Sigmoid colon (tissue), 7 donors: ENCODE measurements at regions of chr11 and their contacts with region 1.

Region 1: GRCh38 chr11:66386171-66387069 is 14.9 kb upstream of the SLC29A2 start:
- DNase-seq: peak; percentile 92
- H3K4me3 ChIP-seq: peak overlapping the region in 3 of 4 donors; percentile 8 to 30 (median 24)
- H3K27ac ChIP-seq: peak overlapping the region in 1 of 4 donors; percentile 23
- H3K4me1 ChIP-seq: peaks cover 0 to 6% (median 4%) of the 10 kb centered on the region in 4 donors
- H3K27me3 ChIP-seq: peaks cover 0 to 5% (median 0%) of the 10 kb centered on the region in 3 donors
- CTCF ChIP-seq: peak; percentile 68 to 93 (median 76)
- EP300 ChIP-seq: no peak
- POLR2A ChIP-seq: no peak

Region 2: DNA sequence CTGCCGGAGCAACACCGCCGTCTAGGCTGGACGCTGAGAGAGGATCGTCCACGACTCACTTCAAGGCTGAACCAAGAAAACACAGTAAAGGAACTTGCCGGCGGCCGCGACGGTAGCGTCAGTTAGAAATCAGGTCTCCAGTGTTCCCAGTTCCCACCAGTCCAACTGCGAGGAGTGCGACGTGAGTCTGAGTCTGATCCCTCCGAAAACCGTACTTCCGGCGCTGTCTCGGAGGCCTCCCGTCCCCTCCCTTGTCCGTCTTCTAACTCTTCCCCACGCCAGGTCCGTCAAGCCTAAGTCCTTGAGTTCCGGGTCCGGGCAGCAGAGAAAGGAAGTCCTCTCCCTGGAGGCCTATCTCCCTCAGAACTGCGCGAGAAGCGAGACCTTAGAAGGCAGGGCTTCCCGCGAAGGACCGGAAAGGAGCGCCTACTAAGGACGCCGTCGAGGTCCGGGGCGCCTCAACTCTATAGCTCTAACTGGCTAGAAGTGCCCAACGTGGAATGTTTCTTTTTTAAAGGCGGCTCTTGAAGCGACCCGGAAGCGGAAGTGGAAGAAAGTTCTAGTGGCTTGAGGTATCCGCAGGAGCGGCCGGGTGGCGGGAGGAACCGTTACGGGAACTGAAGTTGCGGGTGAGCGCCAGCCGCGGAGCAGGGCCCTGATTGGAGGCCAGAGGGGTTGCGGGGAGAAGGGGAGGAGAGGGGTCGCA is 384.3 kb before region 1 on chr11 and contains the starts of genes BANF1 and EIF1AD:
- intact Hi-C with region 1: no loop called
- DNase-seq: peak; percentile 97
- H3K4me3 ChIP-seq: peak within 1 kb of the TSS; percentile 66 to 85 (median 72)
- H3K27ac ChIP-seq: peak within 1 kb of the TSS; percentile 86 to 94 (median 92)
- H3K4me1 ChIP-seq: peaks cover 0 to 31% (median 26%) of the 10 kb centered on the region in 4 donors
- H3K27me3 ChIP-seq: no peaks in the 10 kb centered on the region
- CTCF ChIP-seq: no peak
- EP300 ChIP-seq: no peak
- POLR2A ChIP-seq: peak; percentile 17 to 56
- total RNA-seq, gene BANF1: 40.4 to 76.4 (median 50.5) TPM
- total RNA-seq, gene EIF1AD: 19.4 to 23.9 (median 21.1) TPM

Region 3: GRCh38 chr11:66311965-66312548 is 74.4 kb before region 1 on chr11:
- intact Hi-C with region 1: loop called (anchors 1 kb)
- DNase-seq: peak; percentile 96
- H3K4me3 ChIP-seq: peak overlapping the region; percentile 47 to 58 (median 52)
- H3K27ac ChIP-seq: peak overlapping the region; percentile 86 to 94 (median 90)
- H3K4me1 ChIP-seq: peaks cover 0 to 47% (median 42%) of the 10 kb centered on the region in 4 donors
- H3K27me3 ChIP-seq: no peaks in the 10 kb centered on the region
- CTCF ChIP-seq: peak; percentile 8 to 98 (median 61)
- EP300 ChIP-seq: no peak
- POLR2A ChIP-seq: no peak

Region 4: GRCh38 chr11:66328307-66329144 is 57.9 kb before region 1 on chr11:
- intact Hi-C with region 1: loop called (anchors 5 kb)
- DNase-seq: peak; percentile 88
- H3K4me3 ChIP-seq: no peak overlapping the region
- H3K27ac ChIP-seq: peak overlapping the region; percentile 1 to 81 (median 54)
- H3K4me1 ChIP-seq: peaks cover 0 to 34% (median 31%) of the 10 kb centered on the region in 4 donors
- H3K27me3 ChIP-seq: no peaks in the 10 kb centered on the region
- CTCF ChIP-seq: peak; percentile 95 to 99 (median 98)
- EP300 ChIP-seq: no peak
- POLR2A ChIP-seq: no peak

Region 5: DNA sequence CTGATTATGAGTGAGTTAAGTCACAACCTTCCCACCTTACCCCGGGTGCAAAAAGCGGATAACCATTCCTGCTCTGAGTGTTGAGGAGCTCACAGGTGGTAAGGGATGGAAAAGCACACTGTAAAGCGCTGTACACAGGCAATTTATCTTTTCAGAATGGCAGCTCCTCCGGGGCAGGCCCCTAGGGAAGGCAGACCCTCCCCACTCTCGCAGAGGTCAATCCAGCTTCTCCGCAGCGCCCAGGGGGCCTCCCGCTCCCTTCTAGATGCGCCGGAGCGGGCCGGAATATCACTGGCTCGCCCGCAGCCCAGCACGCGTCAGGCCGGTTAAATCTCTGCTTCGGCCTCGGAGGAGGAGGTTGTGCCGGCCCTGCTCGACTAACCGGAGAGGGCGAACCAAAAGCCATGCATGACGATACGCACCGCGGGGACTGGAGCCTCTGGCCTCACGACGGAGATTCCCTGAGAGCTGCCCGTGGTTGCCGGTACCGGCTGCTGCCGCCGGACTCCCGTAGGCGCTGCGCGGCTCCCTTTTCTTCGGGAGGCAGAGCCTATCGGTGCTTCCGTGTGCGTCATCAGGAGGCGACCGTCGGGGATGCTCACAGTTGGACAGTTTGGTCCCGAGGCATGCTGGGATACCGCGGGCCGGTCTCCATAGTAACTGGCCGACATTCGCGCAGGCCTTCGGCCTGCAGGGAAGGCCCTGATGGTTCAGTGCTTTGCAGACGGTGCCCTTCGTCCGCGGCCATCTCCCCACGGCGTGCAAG is 41.7 kb before region 1 on chr11 and contains the start of gene BRMS1:
- intact Hi-C with region 1: loop called (anchors 5 kb)
- DNase-seq: peak; percentile 99
- H3K4me3 ChIP-seq: peak within 1 kb of the TSS; percentile 82 to 97 (median 90)
- H3K27ac ChIP-seq: peak within 1 kb of the TSS; percentile 85 to 91 (median 87)
- H3K4me1 ChIP-seq: peaks cover 4 to 41% (median 40%) of the 10 kb centered on the region in 4 donors
- H3K27me3 ChIP-seq: no peaks in the 10 kb centered on the region
- CTCF ChIP-seq: peak in 3 of 4 experiments; percentile 6 to 42 (median 12)
- EP300 ChIP-seq: peak in 1 of 4 donors; percentile 41
- POLR2A ChIP-seq: peak; percentile 78 to 87
- total RNA-seq, gene BRMS1: 20.2 to 36.2 (median 24.9) TPM

Region 6: GRCh38 chr11:66727282-66727882 is 341.0 kb after region 1 on chr11:
- intact Hi-C with region 1: no loop called
- DNase-seq: peak; percentile 59
- H3K4me3 ChIP-seq: peak overlapping the region; percentile 20 to 55 (median 46)
- H3K27ac ChIP-seq: no peak overlapping the region
- H3K4me1 ChIP-seq: peaks cover 0 to 18% (median 17%) of the 10 kb centered on the region in 4 donors
- H3K27me3 ChIP-seq: peaks cover 2 to 61% (median 27%) of the 10 kb centered on the region in 3 donors
- CTCF ChIP-seq: no peak
- EP300 ChIP-seq: no peak
- POLR2A ChIP-seq: no peak